Activated CD8-positive, alpha-beta T cell treated with anti-CD3 and anti-CD28 coated beads for 36 hours (primary cell): ENCODE measurements at regions of chr21 and their contacts with region 1.

Region 1: DNA sequence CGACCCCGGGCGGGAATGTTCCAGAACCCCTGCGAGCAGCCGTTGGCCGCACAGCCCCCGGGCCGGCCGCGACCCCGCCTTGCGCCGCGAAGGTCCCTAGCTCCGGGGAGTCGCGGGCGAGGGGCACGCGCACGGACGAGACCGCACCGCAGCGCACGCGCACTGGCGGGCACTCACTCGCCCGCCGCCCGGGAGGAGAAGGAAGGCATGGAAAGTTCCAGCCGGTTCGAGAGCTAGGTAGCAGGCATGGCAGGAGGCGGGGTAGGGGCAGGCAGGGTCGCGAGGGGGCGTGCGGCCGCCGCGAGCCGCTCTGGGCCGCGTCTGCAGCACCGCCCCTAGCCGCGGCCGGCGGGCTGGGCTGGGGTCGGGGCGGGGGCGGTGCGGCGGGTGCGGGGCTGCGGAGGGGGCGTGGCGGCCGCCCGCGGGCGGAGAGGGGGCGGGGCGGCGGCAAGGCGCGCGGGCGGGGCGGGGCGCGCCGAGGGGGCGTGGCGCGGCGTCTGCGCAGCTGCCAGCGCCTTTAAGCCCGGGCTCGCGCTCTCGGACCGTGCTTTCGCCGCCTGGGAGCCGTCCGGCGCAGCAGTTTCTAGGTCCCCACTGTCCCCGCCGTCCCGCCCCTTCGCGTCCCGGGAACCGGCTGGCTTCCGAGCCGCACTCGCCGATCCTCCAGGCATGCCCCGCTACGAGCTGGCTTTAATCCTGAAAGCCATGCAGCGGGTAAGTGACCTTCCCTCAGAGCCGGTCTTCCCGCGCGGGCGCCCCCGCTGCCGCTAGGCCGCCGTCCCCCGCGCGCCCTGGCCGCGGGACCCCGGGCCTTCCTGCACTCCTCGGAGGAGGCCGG is at the starts of genes MRPS6 and SLC5A3:
- DNase-seq: peak; percentile 74
- ATAC-seq: peak; percentile 69
- H3K4me3 Mint-ChIP-seq: peak within 1 kb of the TSS; percentile 95
- H3K27ac Mint-ChIP-seq: peak within 1 kb of the TSS; percentile 91
- H3K4me1 Mint-ChIP-seq: peaks cover 37% of the 10 kb centered on the region
- H3K27me3 Mint-ChIP-seq: no peaks in the 10 kb centered on the region
- CTCF ChIP-seq: no peak
- total RNA-seq, gene MRPS6: 93.9 to 95.2 TPM
- total RNA-seq, gene SLC5A3: 21.1 to 21.9 TPM

Region 2: GRCh38 chr21:33931799-33932390 is 141.4 kb before region 1 on chr21:
- CTCF ChIA-PET with region 1: interaction called, 13 read pairs
- POLR2A ChIA-PET with region 1: interaction called, 7 read pairs
- intact Hi-C with region 1: no loop called
- DNase-seq: no peak
- ATAC-seq: no peak
- H3K4me3 Mint-ChIP-seq: peak overlapping the region; percentile 91
- H3K27ac Mint-ChIP-seq: peak overlapping the region; percentile 99
- H3K4me1 Mint-ChIP-seq: peaks cover 33% of the 10 kb centered on the region
- H3K27me3 Mint-ChIP-seq: no peaks in the 10 kb centered on the region
- CTCF ChIP-seq: no peak

Region 3: DNA sequence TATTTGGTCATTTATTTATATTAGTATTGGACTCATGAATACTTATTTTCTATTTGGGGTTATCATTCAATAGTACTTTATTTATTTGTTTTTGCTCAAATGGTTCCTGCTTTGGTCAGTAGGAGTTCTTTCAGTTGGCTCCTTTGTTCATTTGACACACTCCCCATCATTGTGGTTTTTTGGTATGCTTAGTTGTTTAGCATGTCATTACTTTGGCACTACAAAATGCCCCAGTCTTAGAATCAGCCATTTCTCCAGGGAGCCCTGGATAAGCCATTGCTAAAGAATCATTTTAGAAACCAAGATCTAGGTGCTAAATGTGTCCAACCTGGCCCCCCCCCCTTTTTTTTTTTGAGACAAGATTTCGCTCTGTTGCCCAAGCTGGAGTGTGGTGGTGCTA is 61.6 kb before region 1 on chr21:
- CTCF ChIA-PET with region 1: no interaction called
- POLR2A ChIA-PET with region 1: no interaction called
- intact Hi-C with region 1: no loop called
- DNase-seq: no peak
- ATAC-seq: no peak
- H3K4me3 Mint-ChIP-seq: no peak overlapping the region
- H3K27ac Mint-ChIP-seq: no peak overlapping the region
- H3K4me1 Mint-ChIP-seq: peaks cover 12% of the 10 kb centered on the region
- H3K27me3 Mint-ChIP-seq: no peaks in the 10 kb centered on the region
- CTCF ChIP-seq: no peak

Region 4: GRCh38 chr21:34091607-34092006 is 18.4 kb after region 1 on chr21:
- CTCF ChIA-PET with region 1: interaction called, 6 read pairs
- POLR2A ChIA-PET with region 1: interaction called, 13 read pairs
- intact Hi-C with region 1: no loop called
- DNase-seq: no peak
- ATAC-seq: no peak
- H3K4me3 Mint-ChIP-seq: no peak overlapping the region
- H3K27ac Mint-ChIP-seq: peak overlapping the region; percentile 47
- H3K4me1 Mint-ChIP-seq: peaks cover 57% of the 10 kb centered on the region
- H3K27me3 Mint-ChIP-seq: no peaks in the 10 kb centered on the region
- CTCF ChIP-seq: peak; percentile 43